ENCODE measurements at regions of chr16 and their contacts with region 1.

Region 1: DNA sequence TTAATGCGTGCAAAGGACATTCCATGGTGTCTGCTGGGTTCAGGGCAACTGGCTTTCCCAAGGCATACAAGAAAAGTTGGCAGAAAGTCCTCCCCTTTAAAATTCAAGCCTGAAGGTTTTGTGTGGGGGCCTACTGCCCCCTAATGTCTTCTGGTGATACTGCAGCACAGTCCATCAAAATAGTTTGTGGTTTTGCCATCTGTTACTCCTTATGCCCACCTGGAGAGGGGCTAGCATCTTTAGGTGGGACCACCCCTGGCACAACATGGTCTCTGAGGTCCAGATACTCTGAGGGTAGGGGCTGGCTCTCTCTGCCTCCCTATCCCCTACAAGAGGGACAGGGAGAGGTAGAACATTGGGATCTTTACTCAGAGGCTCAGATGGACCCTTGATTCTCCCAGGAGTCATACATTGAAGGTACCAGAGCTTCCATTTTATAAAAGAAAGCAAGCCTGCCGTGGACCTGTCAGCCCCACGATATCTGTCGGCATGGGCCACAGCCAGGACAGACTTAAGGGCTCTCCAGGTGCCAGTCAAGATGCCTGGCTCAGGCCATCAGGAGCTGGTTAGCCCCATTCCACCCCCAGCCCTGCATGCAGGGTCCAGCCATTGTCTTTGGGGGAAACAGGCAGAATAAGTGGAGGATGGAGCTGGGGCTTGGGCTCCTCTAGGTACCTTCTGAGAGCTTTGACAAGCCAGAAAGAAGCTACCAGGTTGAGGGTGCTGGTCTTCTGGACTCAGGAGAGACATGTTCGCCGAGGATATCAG is 6.3 kb downstream of the ESRP2 start:
- DNase-seq: peak; percentile 84
- H3K4me3 Mint-ChIP-seq: peak overlapping the region; percentile 37
- H3K27ac Mint-ChIP-seq: peak overlapping the region; percentile 34
- H3K4me1 Mint-ChIP-seq: peaks cover 43% of the 10 kb centered on the region
- H3K27me3 Mint-ChIP-seq: no peaks in the 10 kb centered on the region

Region 2: GRCh38 chr16:67999985-68000384 is 229.6 kb before region 1 on chr16:
- intact Hi-C with region 1: loop called (anchors 5 kb)
- DNase-seq: peak; percentile 68
- H3K4me3 Mint-ChIP-seq: peak overlapping the region; percentile 80
- H3K27ac Mint-ChIP-seq: peak overlapping the region; percentile 84
- H3K4me1 Mint-ChIP-seq: peaks cover 37% of the 10 kb centered on the region
- H3K27me3 Mint-ChIP-seq: no peaks in the 10 kb centered on the region

Region 3: DNA sequence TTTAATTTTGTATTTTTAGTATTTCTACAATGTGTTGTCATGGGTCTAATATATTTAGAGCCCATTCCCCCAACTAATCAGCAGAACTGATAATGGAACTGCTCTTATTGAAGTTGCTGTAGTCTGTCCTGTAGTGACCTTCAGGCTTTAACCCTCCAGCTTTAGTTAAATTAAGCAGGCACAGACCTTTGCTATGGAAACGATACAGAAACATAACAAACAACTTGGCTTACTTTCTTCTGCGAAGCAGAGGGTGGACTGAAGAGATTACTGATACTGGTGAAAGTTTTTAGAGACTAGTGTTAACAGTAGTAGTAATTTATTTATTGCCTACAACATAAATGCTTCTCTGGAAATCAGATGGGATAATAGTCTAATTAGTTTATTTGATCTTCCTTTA is 83.0 kb before region 1 on chr16:
- intact Hi-C with region 1: loop called (anchors 5 kb)
- DNase-seq: no peak
- H3K4me3 Mint-ChIP-seq: no peak overlapping the region
- H3K27ac Mint-ChIP-seq: no peak overlapping the region
- H3K4me1 Mint-ChIP-seq: peaks cover 25% of the 10 kb centered on the region
- H3K27me3 Mint-ChIP-seq: no peaks in the 10 kb centered on the region

Region 4: DNA sequence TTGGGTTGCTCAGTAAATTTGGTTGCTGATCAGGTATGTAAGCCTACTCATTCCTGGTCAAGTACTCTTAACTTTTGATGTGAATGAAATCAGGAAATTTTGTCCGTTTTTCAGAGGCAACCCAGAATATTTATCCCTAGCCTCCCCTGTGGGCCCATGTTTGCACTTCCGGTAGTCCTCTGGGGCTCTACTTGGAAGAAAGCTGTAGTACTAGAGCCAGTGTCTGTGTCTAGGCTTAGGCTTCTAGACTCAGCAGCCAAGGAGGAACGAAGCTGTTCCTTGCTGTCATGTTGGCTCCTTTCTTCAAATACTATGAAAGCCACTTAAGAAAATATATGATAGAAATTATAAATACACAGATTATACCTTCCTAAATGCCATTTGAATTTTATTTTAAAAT is 14.9 kb before region 1 on chr16:
- intact Hi-C with region 1: loop called (anchors 2 kb)
- DNase-seq: no peak
- H3K4me3 Mint-ChIP-seq: no peak overlapping the region
- H3K27ac Mint-ChIP-seq: peak overlapping the region; percentile 72
- H3K4me1 Mint-ChIP-seq: peaks cover 38% of the 10 kb centered on the region
- H3K27me3 Mint-ChIP-seq: no peaks in the 10 kb centered on the region

Measured in activated CD4-positive, alpha-beta T cell treated with anti-CD3 and anti-CD28 coated beads, Interleukin-2, amount 10 ng/mL, durations not matched to agents 24 days and 14 days (primary cell).